Activated naive CD4-positive, alpha-beta T cell treated with anti-CD3 and anti-CD28 coated beads for 36 hours (primary cell): ENCODE measurements at regions of chr2 and their contacts with region 1.

Region 1: DNA sequence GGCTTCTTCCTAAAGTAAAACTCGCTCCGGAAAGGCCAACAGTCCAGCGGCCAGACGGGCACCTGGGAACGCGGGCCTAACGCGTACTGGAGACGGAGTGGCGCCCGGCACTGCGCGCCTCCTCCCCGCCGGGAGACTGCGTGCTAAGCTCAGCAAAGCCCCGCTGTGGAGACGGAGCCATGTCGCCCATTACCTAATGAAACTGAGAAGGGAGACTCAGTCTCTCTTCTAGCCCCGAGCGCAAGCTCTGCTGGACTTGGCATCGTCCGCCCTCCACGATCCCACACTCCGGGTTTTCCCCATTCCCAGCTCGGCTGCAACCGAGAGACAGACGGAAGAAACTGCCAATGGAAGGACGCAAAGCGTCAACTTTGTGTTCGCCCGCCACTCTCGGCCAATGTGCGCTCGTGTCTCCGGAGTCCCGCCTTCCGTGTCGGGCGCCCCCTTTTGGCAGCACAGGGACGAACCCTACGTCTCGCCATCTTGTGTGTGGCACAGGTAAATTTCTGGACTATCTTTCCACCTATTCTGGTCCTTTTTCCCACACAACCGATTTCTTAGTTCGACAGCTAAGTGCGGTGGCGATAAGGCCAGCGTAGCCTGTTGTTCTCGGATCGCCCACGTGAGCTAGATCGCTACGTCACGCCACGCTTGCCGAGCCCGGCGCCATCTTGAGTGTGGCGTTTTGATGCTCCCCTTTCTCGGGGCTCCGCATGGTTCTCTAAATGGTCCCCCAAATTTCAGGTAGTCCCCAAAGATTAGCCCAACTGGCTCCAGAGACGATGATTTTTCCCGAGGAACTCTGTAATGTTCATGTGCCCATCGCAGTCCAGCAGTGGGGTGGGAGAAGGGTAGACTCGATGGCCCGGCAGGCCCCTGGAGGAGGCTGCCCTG is 1.3 kb upstream of the PTMA start:
- DNase-seq: peak; percentile 98
- H3K4me3 Mint-ChIP-seq: peak overlapping the region; percentile 91
- H3K27ac Mint-ChIP-seq: peak overlapping the region; percentile 100
- H3K4me1 Mint-ChIP-seq: peaks cover 18% of the 10 kb centered on the region
- H3K27me3 Mint-ChIP-seq: peaks cover 2% of the 10 kb centered on the region

Region 2: GRCh38 chr2:231399853-231400680 is 306.9 kb before region 1 on chr2:
- CTCF ChIA-PET with region 1: no interaction called
- intact Hi-C with region 1: no loop called
- DNase-seq: no peak
- H3K4me3 Mint-ChIP-seq: no peak overlapping the region
- H3K27ac Mint-ChIP-seq: no peak overlapping the region
- H3K4me1 Mint-ChIP-seq: peaks cover 4% of the 10 kb centered on the region
- H3K27me3 Mint-ChIP-seq: peaks cover 12% of the 10 kb centered on the region

Region 3: GRCh38 chr2:231463698-231464575 is 243.0 kb before region 1 on chr2 and contains the start of gene NCL:
- CTCF ChIA-PET with region 1: interaction called, 3 read pairs
- intact Hi-C with region 1: loop called (anchors 1 kb)
- DNase-seq: peak; percentile 87
- H3K4me3 Mint-ChIP-seq: peak within 1 kb of the TSS; percentile 97
- H3K27ac Mint-ChIP-seq: peak within 1 kb of the TSS; percentile 98
- H3K4me1 Mint-ChIP-seq: peaks cover 46% of the 10 kb centered on the region
- H3K27me3 Mint-ChIP-seq: no peaks in the 10 kb centered on the region
- total RNA-seq, gene NCL: 908 to 911 TPM

Region 4: DNA sequence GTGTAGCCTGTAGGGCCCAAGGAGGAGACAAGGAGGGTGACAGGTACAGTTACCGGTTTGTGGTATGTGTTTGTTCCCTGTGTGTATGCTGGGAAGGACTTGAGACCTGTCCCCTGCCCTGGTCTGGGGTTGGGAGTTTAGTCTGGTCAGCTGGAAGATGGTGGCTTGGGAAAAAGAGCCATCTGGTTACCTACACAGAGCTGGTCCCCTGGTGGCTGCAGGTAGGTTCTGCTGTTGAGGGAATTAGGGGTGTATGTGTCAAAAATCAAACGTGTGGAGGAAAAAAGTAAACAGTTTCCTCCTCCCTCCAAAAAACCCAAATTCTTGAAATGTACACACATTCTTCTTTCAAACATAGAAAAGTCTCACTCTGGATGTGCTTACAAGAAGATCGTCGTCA is 25.6 kb after region 1 on chr2:
- CTCF ChIA-PET with region 1: no interaction called
- intact Hi-C with region 1: no loop called
- DNase-seq: no peak
- H3K4me3 Mint-ChIP-seq: no peak overlapping the region
- H3K27ac Mint-ChIP-seq: no peak overlapping the region
- H3K4me1 Mint-ChIP-seq: no peaks in the 10 kb centered on the region
- H3K27me3 Mint-ChIP-seq: no peaks in the 10 kb centered on the region

Region 5: DNA sequence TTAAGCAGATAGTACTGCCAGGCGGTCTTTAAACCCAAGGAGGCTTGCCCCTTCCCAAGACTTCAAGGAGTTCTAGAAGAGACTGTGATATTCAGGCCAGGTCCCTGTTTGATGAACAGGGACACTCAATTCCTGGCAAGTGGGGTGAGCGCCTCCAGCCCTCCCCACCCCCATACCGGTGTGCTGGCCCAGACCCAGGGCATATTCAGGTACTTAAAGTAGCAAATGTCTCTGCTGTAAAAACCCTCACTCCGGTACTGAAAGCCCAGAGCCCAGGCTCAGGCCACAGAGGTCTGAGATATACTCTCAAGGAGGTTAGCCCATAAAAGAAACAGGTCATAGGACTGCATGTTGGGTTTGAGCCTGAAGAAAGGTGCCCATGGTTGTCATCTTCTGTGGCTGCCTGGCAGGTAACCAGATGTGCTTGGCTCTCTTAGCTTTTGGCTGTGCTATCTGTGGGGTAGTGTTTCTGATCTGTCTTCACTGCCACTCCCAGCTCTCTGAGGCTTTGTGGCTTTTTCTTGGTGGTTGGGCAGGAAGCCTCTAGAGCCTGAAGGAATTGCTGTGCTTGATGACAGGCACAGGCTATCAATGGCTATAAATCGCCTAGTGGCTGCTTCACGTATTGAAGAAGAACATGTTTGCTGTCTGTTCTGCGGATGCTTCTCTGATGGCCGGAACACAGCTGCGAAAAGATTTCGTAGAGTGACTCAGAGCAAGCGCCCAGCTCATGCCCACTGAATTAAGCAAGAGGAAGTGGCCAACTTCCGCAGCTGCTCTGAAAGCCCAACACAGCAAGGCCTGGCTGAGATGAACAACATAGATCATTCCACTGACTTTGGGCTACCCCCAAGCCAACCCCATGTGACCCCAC is 608.3 kb after region 1 on chr2:
- CTCF ChIA-PET with region 1: no interaction called
- intact Hi-C with region 1: loop called (anchors 5 kb)
- DNase-seq: peak; percentile 90
- H3K4me3 Mint-ChIP-seq: peak overlapping the region; percentile 61
- H3K27ac Mint-ChIP-seq: peak overlapping the region; percentile 92
- H3K4me1 Mint-ChIP-seq: peaks cover 70% of the 10 kb centered on the region
- H3K27me3 Mint-ChIP-seq: no peaks in the 10 kb centered on the region